Activated CD4-positive, alpha-beta T cell treated with anti-CD3 and anti-CD28 coated beads, Interleukin-2, amount 10 ng/mL, durations not matched to agents 7 days and 5 days (primary cell): ENCODE measurements at regions of chr12 and their contacts with region 1.

Region 1: GRCh38 chr12:49967042-49967776 is 5.5 kb downstream of the AQP5 start:
- DNase-seq: peak; percentile 92
- H3K4me3 Mint-ChIP-seq: peak overlapping the region; percentile 40
- H3K27ac Mint-ChIP-seq: no peak overlapping the region
- H3K4me1 Mint-ChIP-seq: peaks cover 6% of the 10 kb centered on the region
- H3K27me3 Mint-ChIP-seq: peaks cover 35% of the 10 kb centered on the region

Region 2: DNA sequence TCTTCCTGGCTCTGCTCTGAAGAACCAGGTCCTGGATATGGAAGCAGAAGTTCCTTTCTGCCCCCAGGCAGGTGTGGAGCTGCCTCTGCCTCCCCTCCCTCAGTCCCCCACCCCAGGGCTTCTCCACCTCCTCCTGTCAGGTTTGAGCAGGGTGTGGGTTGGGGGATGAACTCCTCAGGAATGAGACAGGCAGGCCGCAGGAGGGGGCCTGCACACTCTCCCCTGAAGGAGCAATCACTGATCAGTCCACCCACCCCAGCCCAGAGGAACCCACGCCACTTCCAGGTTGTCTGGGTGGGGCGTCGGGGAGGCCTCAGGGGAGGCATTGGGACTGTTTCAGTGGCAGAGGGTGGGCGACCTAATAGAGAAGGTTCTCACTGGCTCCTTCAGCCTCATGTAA is 90.1 kb before region 1 on chr12:
- CTCF ChIA-PET with region 1: no interaction called
- POLR2A ChIA-PET with region 1: no interaction called
- DNase-seq: no peak
- H3K4me3 Mint-ChIP-seq: no peak overlapping the region
- H3K27ac Mint-ChIP-seq: no peak overlapping the region
- H3K4me1 Mint-ChIP-seq: no peaks in the 10 kb centered on the region
- H3K27me3 Mint-ChIP-seq: no peaks in the 10 kb centered on the region

Region 3: GRCh38 chr12:49930515-49931288 is 36.5 kb before region 1 on chr12:
- CTCF ChIA-PET with region 1: interaction called, 10 read pairs
- POLR2A ChIA-PET with region 1: no interaction called
- DNase-seq: no peak
- H3K4me3 Mint-ChIP-seq: no peak overlapping the region
- H3K27ac Mint-ChIP-seq: no peak overlapping the region
- H3K4me1 Mint-ChIP-seq: no peaks in the 10 kb centered on the region
- H3K27me3 Mint-ChIP-seq: peaks cover 7% of the 10 kb centered on the region

Region 4: DNA sequence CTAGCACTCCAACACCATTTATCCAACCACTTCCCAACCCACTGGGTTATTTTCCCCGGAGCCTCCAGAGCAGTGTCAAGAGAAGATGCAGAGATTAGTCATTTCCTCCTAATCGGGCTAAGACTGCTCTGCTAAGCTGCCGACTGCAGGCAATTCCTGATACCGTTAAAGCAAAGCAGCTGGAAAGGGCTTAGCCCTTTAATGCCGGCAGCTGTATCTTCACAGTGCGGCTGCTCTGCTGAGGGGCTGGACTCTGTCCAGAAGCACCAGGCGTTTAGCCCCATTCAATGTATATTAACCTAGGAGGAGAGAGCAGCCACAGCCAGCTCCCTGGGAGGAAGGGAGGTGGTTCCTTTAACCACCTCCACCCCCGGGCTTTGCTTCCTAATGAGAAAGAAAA is 16.7 kb after region 1 on chr12:
- CTCF ChIA-PET with region 1: interaction called, 87 read pairs
- POLR2A ChIA-PET with region 1: interaction called, 3 read pairs
- DNase-seq: no peak
- H3K4me3 Mint-ChIP-seq: no peak overlapping the region
- H3K27ac Mint-ChIP-seq: no peak overlapping the region
- H3K4me1 Mint-ChIP-seq: no peaks in the 10 kb centered on the region
- H3K27me3 Mint-ChIP-seq: no peaks in the 10 kb centered on the region

Region 5: DNA sequence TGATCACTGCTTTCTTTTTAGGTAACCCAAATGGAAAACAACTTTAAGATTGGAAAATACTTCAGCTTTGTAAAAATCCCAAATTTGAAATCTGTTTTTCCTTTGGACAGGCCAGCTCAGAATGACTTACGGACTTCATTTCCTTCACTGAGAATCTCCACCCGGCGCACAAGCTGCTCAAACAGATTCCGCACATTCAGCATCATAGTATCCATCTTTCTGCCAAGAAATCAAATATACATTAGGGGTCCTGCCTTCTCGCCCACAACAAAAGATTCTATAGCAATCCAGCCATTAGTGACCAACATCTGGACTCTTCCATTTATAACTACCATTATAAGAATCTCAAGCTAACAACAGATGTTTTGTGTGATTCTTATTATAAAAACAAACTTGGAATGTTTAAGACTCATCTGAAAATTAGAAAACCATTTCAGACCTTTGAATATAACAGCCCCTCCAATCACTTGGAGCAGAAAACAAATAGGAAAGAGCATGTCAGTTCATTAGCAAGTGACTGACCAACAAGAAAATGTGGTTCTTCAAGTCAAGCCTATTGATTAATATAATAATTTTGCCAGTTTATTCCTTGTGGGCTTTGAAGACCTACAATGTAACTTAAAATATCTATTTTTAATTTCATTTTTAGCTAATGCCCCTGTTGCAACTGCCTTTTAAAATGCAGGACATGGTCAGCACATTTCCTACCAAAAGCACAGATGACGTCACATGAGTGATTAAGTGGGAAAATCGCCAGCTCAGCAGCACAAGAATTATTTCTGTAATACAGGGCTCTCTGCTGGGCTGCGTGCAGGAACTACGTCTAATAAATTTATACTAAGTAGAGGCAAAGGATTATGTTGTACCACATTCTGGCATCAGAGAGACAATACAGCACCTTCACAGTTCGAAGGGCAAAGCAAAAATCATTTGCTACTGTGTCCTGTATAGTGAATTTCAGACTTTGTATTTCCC is 49.6 kb after region 1 on chr12:
- CTCF ChIA-PET with region 1: interaction called, 11 read pairs
- POLR2A ChIA-PET with region 1: interaction called, 3 read pairs
- DNase-seq: no peak
- H3K4me3 Mint-ChIP-seq: no peak overlapping the region
- H3K27ac Mint-ChIP-seq: no peak overlapping the region
- H3K4me1 Mint-ChIP-seq: peaks cover 39% of the 10 kb centered on the region
- H3K27me3 Mint-ChIP-seq: no peaks in the 10 kb centered on the region

Region 6: GRCh38 chr12:50055831-50056638 is 88.8 kb after region 1 on chr12:
- CTCF ChIA-PET with region 1: interaction called, 37 read pairs
- POLR2A ChIA-PET with region 1: no interaction called
- DNase-seq: peak; percentile 63
- H3K4me3 Mint-ChIP-seq: peak overlapping the region; percentile 28
- H3K27ac Mint-ChIP-seq: no peak overlapping the region
- H3K4me1 Mint-ChIP-seq: peaks cover 44% of the 10 kb centered on the region
- H3K27me3 Mint-ChIP-seq: peaks cover 44% of the 10 kb centered on the region